Common myeloid progenitor, CD34-positive (primary cell): ENCODE measurements at regions of chr10 and their contacts with region 1.

Region 1: DNA sequence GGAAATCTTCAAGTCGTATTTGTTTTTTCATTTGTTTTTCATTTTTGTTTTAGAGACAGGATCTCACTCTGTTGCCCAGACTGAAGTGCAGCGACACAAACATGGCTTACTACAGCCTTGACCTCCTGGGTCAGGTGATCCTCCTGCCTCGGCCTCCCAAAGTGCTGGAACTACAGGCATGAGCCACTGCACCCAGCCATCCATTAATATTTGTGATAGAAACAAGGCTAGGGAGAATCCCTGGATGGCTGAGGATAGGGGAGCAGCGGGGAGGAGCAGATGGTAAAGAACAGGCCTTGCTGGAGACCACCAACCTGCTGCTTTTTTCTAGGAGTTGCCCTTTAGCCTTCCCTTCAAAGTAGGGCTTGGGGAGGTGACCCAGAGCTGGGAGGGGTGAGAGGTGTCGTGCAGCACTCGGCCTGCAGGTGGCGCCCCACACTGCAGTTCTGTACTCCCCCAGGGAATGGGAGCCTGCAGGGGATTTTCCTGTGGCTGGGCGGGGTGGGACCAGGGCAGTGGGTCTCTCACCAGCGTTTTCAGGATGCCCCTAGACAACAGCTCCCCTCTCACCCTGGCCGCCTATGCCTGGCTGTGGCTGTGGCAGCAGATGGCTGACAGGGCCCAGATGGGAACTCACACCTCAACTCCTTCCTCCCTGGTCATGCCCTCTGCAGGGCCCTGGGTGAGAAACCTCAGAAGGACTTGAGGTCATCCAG is 12.6 kb upstream of the CDH23 start:
- DNase-seq: peak; percentile 58 to 81 (median 76)
- H3K4me3 ChIP-seq: no peak overlapping the region
- H3K27ac ChIP-seq: no peak overlapping the region
- H3K4me1 ChIP-seq: peaks cover 1 to 20% (median 11%) of the 10 kb centered on the region in 4 experiments
- H3K27me3 ChIP-seq: peaks cover 0 to 1% (median 0%) of the 10 kb centered on the region in 5 experiments

Region 2: GRCh38 chr10:71343392-71343773 is 40.7 kb before region 1 on chr10:
- CTCF ChIA-PET with region 1: no interaction called
- POLR2A ChIA-PET with region 1: no interaction called
- DNase-seq: peak in 2 of 3 donors; percentile 28 to 29
- H3K4me3 ChIP-seq: no peak overlapping the region
- H3K27ac ChIP-seq: no peak overlapping the region
- H3K4me1 ChIP-seq: peaks cover 0 to 23% (median 1%) of the 10 kb centered on the region in 4 experiments
- H3K27me3 ChIP-seq: no peaks in the 10 kb centered on the region

Region 3: DNA sequence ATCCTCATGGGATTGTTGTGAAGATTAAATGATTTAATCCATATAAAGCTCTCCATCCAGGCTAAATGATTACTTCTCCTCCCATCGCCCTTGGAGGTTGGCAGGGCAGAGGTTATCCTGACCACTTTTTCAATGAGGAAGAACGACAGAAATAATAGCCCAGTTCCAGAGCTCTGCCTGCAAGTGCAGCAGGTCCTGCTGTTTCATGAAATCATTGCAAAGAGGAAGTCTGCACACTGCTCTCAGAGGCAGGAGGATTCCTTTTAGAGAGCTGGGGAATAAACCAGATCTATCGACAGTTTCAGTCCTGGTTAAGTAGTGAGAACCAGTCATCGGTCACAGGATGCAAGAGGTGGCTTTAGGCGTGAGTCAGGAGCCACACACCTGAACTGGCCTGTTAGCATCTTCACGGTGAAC is 12.4 kb before region 1 on chr10:
- CTCF ChIA-PET with region 1: interaction called, 13 read pairs
- POLR2A ChIA-PET with region 1: interaction called, 4 read pairs
- DNase-seq: peak in 2 of 3 donors; percentile 60 to 77
- H3K4me3 ChIP-seq: no peak overlapping the region
- H3K27ac ChIP-seq: no peak overlapping the region
- H3K4me1 ChIP-seq: peaks cover 5 to 38% (median 15%) of the 10 kb centered on the region in 4 experiments
- H3K27me3 ChIP-seq: no peaks in the 10 kb centered on the region

Region 4: DNA sequence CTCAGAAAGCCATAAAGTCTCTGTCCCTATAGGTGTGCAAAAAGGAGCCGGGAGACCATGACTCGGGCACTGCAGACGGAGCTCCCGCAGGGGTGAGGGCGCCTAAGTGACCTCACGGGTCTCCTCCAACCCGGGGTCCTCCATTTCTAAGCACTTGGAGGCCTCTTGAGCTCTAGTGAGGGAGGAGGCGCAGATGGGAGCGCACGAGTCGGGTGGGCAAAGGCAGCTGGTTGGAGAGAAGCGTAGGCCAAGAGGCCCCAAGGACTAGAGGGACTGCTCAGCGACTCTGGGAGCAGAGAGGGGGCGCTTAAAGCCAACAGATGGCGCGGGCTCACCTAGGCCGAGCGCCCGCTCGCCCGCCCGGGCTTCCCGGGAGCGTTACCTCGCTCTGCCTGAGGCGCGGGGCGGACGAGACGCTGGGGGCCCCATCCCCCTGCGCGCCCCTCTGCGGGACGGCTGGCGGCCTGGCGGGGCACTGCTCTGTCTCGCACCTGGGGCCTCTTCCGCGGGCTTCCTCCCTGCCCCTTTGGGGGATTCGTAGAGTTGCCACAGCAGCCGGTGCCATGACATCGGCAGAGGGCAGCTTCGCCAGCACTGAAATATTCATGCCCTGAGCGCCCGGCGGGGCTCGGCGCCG is 12.1 kb after region 1 on chr10:
- CTCF ChIA-PET with region 1: interaction called, 15 read pairs
- POLR2A ChIA-PET with region 1: interaction called, 4 read pairs
- DNase-seq: peak; percentile 63 to 73 (median 65)
- H3K4me3 ChIP-seq: peak overlapping the region; percentile 28 to 76 (median 56)
- H3K27ac ChIP-seq: no peak overlapping the region
- H3K4me1 ChIP-seq: peaks cover 0 to 18% (median 18%) of the 10 kb centered on the region in 4 experiments
- H3K27me3 ChIP-seq: peaks cover 0 to 36% (median 33%) of the 10 kb centered on the region in 5 experiments